ENCODE measurements at regions of chr17 and their contacts with region 1.

Region 1: DNA sequence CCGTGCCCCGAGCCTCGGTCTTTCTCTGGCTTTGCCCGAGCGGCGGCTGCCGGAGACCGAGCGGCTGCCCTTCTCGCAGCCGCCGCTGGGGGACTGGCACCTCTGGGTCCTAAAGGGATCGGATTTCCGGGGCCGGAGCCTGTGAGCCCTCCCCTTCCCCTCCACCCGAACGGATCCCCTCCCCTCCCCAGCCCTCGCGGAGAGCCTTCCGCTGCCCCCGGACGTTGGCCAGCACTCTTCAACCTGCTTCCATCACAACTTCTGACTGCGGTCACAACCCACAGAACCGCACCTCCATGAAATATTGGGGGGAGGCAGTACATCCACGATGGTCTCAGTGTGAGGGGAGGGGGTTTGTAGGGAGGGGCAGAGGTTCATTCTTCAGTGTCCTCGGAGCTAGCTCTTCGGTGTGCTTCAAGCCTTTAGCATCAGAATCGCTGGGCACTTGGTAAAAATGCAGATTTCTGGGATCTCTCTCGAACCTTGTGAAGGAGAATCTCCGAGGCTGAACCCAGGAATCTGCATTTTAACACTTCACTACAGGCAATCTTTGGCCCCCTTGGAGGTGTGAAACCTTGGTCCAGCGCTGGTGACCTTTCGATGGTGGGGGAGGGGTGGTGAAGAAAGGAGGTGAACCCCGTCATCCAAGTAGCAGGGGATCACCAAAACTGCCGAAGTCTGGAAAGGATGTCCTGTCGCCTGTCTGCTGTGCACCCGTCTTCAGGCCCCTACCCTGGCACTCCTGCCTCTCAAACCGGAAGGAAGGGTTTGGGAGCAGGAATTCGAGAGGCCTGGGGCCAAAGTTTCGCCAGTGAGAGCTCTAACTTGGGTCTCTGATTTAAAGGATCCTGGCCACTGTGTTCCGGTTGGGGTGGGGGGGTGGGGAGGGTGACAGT is 812 bp upstream of the PPP1R9B start:
- DNase-seq: peak; percentile 96
- H3K4me3 Mint-ChIP-seq: peak overlapping the region; percentile 83
- H3K27ac Mint-ChIP-seq: peak overlapping the region; percentile 58
- H3K4me1 Mint-ChIP-seq: peaks cover 61% of the 10 kb centered on the region
- H3K27me3 Mint-ChIP-seq: no peaks in the 10 kb centered on the region
- CTCF ChIP-seq: peak; percentile 75

Region 2: DNA sequence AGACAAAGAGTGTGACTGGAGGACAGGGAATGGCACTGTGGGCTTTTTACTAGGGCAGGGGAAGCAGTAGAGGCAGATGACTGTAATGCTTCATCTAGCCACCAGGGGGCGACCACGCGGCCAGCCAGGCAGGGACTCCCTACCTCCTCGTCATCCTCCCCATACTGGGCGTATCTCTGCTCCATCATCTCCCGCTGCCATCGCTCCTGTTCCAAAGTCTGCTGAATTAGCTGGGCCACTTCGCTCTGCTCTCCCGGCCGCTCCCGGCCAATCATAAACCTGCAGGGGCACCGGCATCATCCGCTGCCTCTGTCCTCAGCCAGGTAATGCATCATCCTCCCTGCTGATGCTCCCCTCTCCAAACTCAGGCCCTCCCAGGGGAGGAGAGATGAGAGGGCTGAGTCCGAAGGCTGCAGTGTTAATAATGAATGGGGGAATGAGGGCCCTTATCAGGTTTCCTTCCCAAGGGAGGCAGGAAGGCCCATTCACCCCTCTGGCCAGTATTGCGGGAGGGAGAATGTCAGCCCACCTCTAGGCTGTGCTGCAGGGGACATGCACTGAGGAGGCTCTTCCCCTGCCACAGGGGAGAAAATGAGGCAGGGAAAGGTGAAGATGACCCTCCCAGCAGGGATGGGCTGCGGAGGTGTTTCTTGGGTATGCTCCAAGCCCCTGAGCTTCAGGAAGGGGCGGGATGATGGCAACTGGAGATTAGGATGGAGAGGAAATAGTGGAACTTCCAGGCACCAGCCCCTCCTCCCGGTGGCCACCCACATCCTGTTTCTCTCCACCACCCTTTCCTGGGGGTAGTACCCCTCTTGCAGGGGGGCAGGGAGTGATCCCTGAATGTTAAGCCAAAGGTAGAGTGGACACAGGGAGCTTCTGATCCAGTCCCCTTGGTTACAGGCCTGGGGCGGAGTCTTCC is 11.1 kb before region 1 on chr17:
- CTCF ChIA-PET with region 1: interaction called, 10 read pairs
- intact Hi-C with region 1: no loop called
- DNase-seq: peak; percentile 89
- H3K4me3 Mint-ChIP-seq: no peak overlapping the region
- H3K27ac Mint-ChIP-seq: no peak overlapping the region
- H3K4me1 Mint-ChIP-seq: peaks cover 9% of the 10 kb centered on the region
- H3K27me3 Mint-ChIP-seq: no peaks in the 10 kb centered on the region
- CTCF ChIP-seq: peak; percentile 99

Region 3: GRCh38 chr17:50169121-50169764 is 18.0 kb after region 1 on chr17:
- CTCF ChIA-PET with region 1: interaction called, 14 read pairs
- intact Hi-C with region 1: no loop called
- DNase-seq: peak; percentile 64
- H3K4me3 Mint-ChIP-seq: peak overlapping the region; percentile 14
- H3K27ac Mint-ChIP-seq: peak overlapping the region; percentile 15
- H3K4me1 Mint-ChIP-seq: peaks cover 12% of the 10 kb centered on the region
- H3K27me3 Mint-ChIP-seq: peaks cover 46% of the 10 kb centered on the region
- CTCF ChIP-seq: peak; percentile 83

Region 4: DNA sequence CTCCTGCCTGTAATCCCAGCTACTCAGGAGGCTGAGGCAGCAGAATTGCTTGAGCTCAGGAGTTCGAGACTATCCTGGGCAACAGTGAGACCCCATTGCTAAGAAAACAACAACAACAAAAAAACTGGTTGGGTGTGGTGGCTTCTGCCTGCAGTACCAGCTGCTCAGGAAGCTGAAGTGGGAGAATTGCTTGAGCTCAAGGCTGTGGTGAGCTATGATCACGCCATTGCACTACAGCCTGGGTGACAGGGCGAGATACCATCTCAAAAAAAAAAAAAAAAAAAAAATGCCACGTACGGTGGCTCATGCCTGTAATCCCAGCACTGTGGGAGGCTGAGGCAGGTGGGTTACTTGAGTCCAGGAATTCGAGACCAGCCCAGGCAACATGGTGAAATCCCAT is 1049.0 kb after region 1 on chr17:
- CTCF ChIA-PET with region 1: no interaction called
- intact Hi-C with region 1: no loop called
- DNase-seq: no peak
- H3K4me3 Mint-ChIP-seq: no peak overlapping the region
- H3K27ac Mint-ChIP-seq: no peak overlapping the region
- H3K4me1 Mint-ChIP-seq: no peaks in the 10 kb centered on the region
- H3K27me3 Mint-ChIP-seq: no peaks in the 10 kb centered on the region
- CTCF ChIP-seq: no peak